Breast epithelium (tissue), 4 donors: ENCODE measurements at regions of chr6 and their contacts with region 1.

Region 1: DNA sequence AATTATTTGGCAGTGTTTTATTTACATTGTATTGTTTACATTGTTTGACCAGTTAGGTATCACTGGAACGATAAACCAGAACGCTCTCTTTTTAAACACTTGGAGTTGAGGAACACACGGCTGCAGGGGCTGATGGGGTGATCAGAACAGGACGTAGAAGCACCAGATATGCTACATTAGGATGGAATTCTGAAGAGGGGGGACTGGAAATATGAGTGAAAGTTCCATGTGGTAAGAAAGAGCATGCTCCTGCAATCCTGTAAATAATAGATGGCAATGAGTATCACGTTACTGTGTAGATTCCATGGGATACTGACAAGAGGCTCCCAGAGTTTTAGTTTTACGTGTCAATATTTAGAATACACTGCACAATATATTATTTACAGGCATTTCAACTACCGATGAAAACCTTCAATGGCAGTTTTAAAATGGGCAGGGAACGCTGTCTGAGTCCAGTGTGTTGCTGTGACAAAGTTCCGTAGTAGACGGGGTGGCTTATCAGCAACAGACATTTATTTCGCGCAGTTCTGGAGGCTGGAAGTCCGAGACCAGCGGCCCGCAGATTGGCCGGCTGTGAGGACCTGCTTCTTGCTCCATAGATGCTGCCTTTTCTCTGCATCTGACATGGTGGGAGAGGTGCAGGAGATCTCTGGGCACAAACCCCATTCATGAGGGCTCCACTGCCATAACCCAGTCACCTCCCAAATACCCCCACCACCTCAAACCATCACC is 43.1 kb downstream of the SYNJ2 start:
- DNase-seq: no peak
- H3K4me3 ChIP-seq: no peak overlapping the region
- H3K27ac ChIP-seq: no peak overlapping the region
- H3K4me1 ChIP-seq: peaks cover 10 to 12% of the 10 kb centered on the region in 2 donors
- H3K27me3 ChIP-seq: no peaks in the 10 kb centered on the region
- CTCF ChIP-seq: no peak
- POLR2A ChIP-seq: no peak

Region 2: GRCh38 chr6:157650261-157650640 is 374.5 kb before region 1 on chr6:
- intact Hi-C with region 1: no loop called
- DNase-seq: peak in 1 of 2 donors; percentile 45
- H3K4me3 ChIP-seq: peak overlapping the region in 2 of 3 donors; percentile 25 to 51
- H3K27ac ChIP-seq: peak overlapping the region in 1 of 2 donors; percentile 20
- H3K4me1 ChIP-seq: no peaks in the 10 kb centered on the region
- H3K27me3 ChIP-seq: no peaks in the 10 kb centered on the region
- CTCF ChIP-seq: no peak
- POLR2A ChIP-seq: no peak

Region 3: GRCh38 chr6:158004701-158005095 is 20.0 kb before region 1 on chr6:
- intact Hi-C with region 1: loop called (anchors 1 kb)
- DNase-seq: no peak
- H3K4me3 ChIP-seq: no peak overlapping the region
- H3K27ac ChIP-seq: peak overlapping the region; percentile 93 to 95
- H3K4me1 ChIP-seq: peaks cover 24 to 34% of the 10 kb centered on the region in 2 donors
- H3K27me3 ChIP-seq: no peaks in the 10 kb centered on the region
- CTCF ChIP-seq: no peak
- POLR2A ChIP-seq: no peak

Region 4: DNA sequence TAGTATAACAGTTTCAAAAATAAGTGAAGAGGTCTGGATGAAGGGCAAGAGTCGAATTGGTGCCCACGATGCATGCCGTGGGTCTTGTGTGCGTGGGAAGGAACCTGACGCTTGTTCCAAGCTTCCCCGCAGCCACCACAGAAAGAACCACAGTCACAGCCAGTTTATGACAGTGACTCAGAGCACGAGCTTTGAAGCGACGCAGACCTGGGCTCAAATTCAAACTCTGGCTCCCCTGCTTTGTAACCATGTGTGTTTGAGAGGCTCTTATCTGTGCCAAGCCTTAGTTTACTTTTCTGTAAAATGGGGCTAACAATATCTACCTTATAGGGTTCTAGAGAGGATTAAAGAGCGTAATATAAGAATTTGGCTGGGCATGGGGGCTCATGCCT is 22.4 kb after region 1 on chr6:
- intact Hi-C with region 1: no loop called
- DNase-seq: no peak
- H3K4me3 ChIP-seq: no peak overlapping the region
- H3K27ac ChIP-seq: no peak overlapping the region
- H3K4me1 ChIP-seq: peaks cover 0 to 6% of the 10 kb centered on the region in 2 donors
- H3K27me3 ChIP-seq: no peaks in the 10 kb centered on the region
- CTCF ChIP-seq: no peak
- POLR2A ChIP-seq: no peak

Region 5: DNA sequence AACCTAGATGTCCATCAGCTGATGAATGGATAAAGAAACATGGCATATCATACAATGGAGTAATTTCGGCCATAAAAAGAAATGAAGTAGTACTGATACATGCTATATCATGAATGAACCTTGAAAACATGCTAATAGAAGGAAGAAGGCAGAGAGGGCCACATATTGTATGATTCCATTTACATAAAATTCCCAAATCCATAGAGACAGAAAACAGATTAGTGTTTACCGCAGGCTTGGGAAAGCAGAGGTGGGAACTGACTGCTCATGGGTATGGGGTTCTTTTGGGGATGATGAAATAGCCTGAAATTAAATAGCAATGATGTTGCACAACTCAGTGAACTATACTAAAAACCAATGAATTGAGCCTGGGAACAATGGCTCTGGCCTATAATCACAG is 85.0 kb after region 1 on chr6:
- intact Hi-C with region 1: no loop called
- DNase-seq: no peak
- H3K4me3 ChIP-seq: no peak overlapping the region
- H3K27ac ChIP-seq: no peak overlapping the region
- H3K4me1 ChIP-seq: no peaks in the 10 kb centered on the region
- H3K27me3 ChIP-seq: no peaks in the 10 kb centered on the region
- CTCF ChIP-seq: no peak
- POLR2A ChIP-seq: no peak